SK-N-SH (cell line): ENCODE measurements at regions of chr15 and their contacts with region 1.

Region 1: GRCh38 chr15:92316586-92317295 is 76.9 kb upstream of the ST8SIA2 start:
- DNase-seq: no peak
- H3K4me3 ChIP-seq: no peak overlapping the region
- H3K27ac ChIP-seq: no peak overlapping the region
- H3K4me1 ChIP-seq: no peaks in the 10 kb centered on the region
- H3K27me3 ChIP-seq: no peaks in the 10 kb centered on the region
- CTCF ChIP-seq: no peak
- EP300 ChIP-seq: no peak
- RAD21 ChIP-seq: no peak

Region 2: DNA sequence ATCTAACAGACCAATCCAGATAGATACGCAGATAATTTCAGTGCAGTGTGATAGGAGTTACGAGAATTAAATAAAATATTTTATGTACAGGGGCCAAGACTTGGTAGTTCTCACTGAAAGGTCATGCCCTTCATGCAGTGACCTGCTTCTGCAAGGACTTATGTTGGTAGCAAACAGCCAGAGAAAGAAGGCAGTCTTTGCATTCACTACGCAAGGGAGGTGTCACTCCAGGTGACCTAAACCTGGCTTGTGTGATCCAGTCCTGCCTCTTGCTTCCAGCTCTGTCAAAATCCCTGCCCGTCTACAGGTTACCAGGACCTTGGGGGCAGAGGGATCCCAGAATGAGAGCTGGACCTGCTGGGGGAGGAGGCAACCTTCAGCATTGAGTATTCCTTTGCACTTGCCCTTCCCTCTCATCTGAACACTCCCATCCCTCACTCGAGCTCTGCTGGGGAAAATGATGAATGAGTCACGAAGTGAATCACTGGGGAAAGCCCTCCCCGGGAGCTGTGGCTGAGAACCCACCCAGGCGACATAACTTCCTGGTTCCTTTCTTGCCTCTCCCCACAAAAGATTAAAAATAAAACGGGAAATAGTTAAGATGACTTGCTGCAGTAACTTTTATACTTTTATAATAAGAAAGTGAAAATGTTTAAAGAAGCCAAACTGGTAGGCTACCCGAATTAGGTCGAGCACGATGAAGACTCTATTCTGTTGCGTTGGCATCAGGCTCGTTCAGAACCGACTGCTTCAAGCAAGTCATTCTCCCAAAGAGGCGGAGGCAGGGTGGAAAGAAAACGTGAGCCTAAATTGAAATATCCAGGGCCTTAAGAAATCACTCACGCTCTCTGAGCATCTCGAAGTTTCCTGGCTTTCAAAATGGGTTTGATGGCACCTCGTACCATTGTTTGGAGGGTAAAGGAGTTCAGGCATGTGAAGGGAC is 247.2 kb before region 1 on chr15:
- CTCF ChIA-PET with region 1: no interaction called
- POLR2A ChIA-PET with region 1: no interaction called
- DNase-seq: no peak
- H3K4me3 ChIP-seq: peak overlapping the region in 1 of 2 experiments; percentile 9; a peak in 1 of 4 replicates
- H3K27ac ChIP-seq: peak overlapping the region in 1 of 2 experiments; percentile 91; a peak in 2 of 4 replicates
- H3K4me1 ChIP-seq: peaks cover 13 to 22% of the 10 kb centered on the region in 2 experiments
- H3K27me3 ChIP-seq: no peaks in the 10 kb centered on the region
- CTCF ChIP-seq: no peak
- EP300 ChIP-seq: peak in 1 of 2 experiments; percentile 45; a peak in 1 of 4 replicates
- RAD21 ChIP-seq: no peak

Region 3: DNA sequence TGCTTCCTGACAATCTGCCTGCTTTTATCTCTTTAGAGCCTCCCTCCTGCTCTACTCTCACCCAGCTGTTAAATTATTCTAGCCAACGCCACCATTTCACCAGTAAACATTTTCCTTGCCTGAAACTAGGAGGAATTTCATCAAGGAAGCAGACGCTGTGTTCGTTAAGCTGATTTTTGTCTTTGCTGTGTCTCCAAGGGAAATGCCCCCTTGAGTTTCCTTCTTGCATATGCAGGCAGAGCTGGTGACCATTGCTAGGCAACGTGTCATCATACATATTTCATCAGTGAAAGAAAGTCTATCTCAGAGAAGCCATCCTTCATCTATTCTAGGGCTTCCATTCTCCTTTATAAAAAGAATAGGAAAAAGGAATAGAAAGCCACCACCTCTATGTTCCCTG is 10.1 kb before region 1 on chr15:
- CTCF ChIA-PET with region 1: interaction called, 10 read pairs
- POLR2A ChIA-PET with region 1: no interaction called
- DNase-seq: peak; percentile 52
- H3K4me3 ChIP-seq: peak overlapping the region in 1 of 2 experiments; percentile 35; a peak in 1 of 4 replicates
- H3K27ac ChIP-seq: no peak overlapping the region
- H3K4me1 ChIP-seq: no peaks in the 10 kb centered on the region; a peak in 1 of 4 replicates
- H3K27me3 ChIP-seq: no peaks in the 10 kb centered on the region
- CTCF ChIP-seq: no peak
- EP300 ChIP-seq: no peak
- RAD21 ChIP-seq: no peak